Ovary (tissue), 10 donors: ENCODE measurements at regions of chr19 and their contacts with region 1.

Region 1: GRCh38 chr19:49877879-49878743 is 609 bp downstream of the TBC1D17 start:
- DNase-seq: peak; percentile 98 to 99 (median 99)
- H3K4me3 ChIP-seq: peak overlapping the region; percentile 84
- H3K27ac ChIP-seq: peak overlapping the region; percentile 97 to 99
- H3K4me1 ChIP-seq: no peaks in the 10 kb centered on the region
- H3K27me3 ChIP-seq: no peaks in the 10 kb centered on the region
- CTCF ChIP-seq: no peak
- EP300 ChIP-seq: no peak
- POLR2A ChIP-seq: no peak

Region 2: DNA sequence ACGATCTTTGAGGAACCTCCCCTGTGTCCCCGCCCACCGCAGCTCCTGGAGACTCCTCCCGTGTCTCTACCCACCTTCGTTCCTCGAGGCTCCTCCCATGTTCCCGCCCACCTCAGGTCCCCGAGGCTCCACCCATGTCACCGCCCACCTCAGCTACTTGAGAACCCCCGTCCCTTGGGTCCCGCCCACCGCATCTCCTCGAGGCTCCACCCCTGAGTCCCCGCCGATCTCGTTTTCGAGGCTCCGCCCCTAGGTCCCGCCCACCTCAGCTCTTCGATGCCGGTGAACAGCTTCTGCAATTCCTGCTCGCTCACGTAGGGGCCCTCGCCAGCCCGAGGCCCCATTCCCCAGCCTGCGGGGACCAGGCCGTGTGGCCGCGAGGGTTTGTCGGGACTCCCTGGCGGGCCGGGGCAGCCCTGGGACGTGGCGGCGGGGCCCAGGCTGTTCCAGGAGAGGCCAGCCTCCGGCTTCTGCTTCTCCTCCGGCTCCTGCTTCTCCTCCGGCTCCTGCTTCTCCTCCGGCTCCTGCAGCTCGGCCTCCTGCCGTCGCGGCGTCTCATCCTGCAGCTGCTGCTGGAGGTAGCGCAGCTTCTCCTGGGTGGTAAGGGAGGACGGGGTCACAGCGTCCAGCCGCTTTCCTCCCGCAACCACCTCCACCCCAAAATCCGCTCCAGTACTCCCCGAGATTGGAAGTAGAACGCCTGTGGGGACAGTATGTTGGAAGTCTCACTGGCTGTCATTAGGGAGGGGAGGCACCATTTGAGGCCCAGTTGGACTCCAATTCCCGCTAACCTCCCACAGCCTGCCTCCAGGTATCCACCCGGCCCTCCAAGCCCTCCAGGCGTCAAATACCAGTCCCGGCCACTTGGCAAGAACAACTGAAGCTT is 131.7 kb before region 1 on chr19:
- intact Hi-C with region 1: loop called in 1 of 4 experiments (anchors 5 kb)
- DNase-seq: peak; percentile 63 to 74 (median 73)
- H3K4me3 ChIP-seq: no peak overlapping the region
- H3K27ac ChIP-seq: no peak overlapping the region
- H3K4me1 ChIP-seq: peaks cover 3% of the 10 kb centered on the region
- H3K27me3 ChIP-seq: no peaks in the 10 kb centered on the region
- CTCF ChIP-seq: no peak
- EP300 ChIP-seq: no peak
- POLR2A ChIP-seq: no peak

Region 3: GRCh38 chr19:49820125-49820524 is 58.0 kb before region 1 on chr19:
- intact Hi-C with region 1: no loop called
- DNase-seq: peak in 1 of 5 donors; percentile 45
- H3K4me3 ChIP-seq: no peak overlapping the region
- H3K27ac ChIP-seq: peak overlapping the region in 1 of 2 donors; percentile 65
- H3K4me1 ChIP-seq: peaks cover 11% of the 10 kb centered on the region
- H3K27me3 ChIP-seq: no peaks in the 10 kb centered on the region
- CTCF ChIP-seq: no peak
- EP300 ChIP-seq: no peak
- POLR2A ChIP-seq: no peak

Region 4: GRCh38 chr19:49929611-49930482 is 51.7 kb after region 1 on chr19:
- intact Hi-C with region 1: loop called in 1 of 4 experiments (anchors 2 kb)
- DNase-seq: peak; percentile 93 to 97 (median 96)
- H3K4me3 ChIP-seq: peak overlapping the region; percentile 94
- H3K27ac ChIP-seq: peak overlapping the region; percentile 82
- H3K4me1 ChIP-seq: peaks cover 10% of the 10 kb centered on the region
- H3K27me3 ChIP-seq: no peaks in the 10 kb centered on the region
- CTCF ChIP-seq: peak in 1 of 3 donors; percentile 47
- EP300 ChIP-seq: no peak
- POLR2A ChIP-seq: no peak